CD4-positive, alpha-beta T cell (primary cell): ENCODE measurements at regions of chr2 and their contacts with region 1.

Region 1: GRCh38 chr2:109031476-109032228 is 42.6 kb upstream of the EDAR start:
- DNase-seq: peak; percentile 52 to 93 (median 75)
- ATAC-seq: peak; percentile 78
- H3K4me3 ChIP-seq: peak overlapping the region; percentile 56
- H3K4me3 Mint-ChIP-seq: peak overlapping the region; percentile 82
- H3K27ac ChIP-seq: peak overlapping the region; percentile 82 to 86
- H3K27ac Mint-ChIP-seq: peak overlapping the region; percentile 92
- H3K4me1 ChIP-seq: peaks cover 81% of the 10 kb centered on the region
- H3K4me1 Mint-ChIP-seq: peaks cover 77% of the 10 kb centered on the region
- H3K27me3 ChIP-seq: no peaks in the 10 kb centered on the region
- H3K27me3 Mint-ChIP-seq: no peaks in the 10 kb centered on the region
- CTCF ChIP-seq: no peak

Region 2: DNA sequence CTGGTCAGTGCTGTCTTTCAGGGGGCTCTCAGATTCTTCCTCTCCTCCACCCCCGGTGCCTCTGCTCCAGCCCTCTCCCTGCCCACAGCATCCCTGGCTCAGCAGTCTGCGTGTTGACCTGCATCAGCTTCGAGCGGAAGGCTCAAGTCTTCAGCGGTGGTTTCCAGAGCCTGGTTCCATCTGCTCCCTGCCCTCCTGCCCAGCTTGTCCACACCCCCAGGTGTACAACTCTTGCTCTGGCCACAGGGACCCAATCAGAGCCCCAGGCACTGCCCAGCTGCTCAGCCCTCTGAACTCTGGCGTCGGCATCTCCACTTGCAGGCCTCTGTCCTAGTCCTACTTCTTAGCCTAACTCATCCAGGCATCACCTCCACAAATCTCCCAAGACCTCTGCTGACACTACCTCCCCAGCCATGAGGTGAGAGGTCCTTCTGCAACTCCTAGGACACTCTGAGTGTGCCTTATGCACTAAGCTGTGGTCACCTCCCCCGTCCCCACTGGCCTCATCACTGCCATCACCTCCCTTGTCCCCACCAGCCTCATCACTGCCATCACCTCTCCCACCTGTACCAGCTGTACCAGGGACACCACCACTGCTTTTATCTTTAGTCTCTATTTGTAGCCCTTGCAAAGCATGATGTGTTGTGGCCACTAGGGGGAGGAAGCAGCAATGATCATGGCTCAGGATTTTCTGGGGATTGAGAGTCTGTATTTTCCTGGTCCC is 103.6 kb before region 1 on chr2:
- CTCF ChIA-PET with region 1: no interaction called
- POLR2A ChIA-PET with region 1: interaction called, 10 read pairs
- intact Hi-C with region 1: no loop called
- DNase-seq: peak in 13 of 14 experiments; percentile 8 to 72 (median 32)
- ATAC-seq: peak; percentile 73
- H3K4me3 ChIP-seq: no peak overlapping the region
- H3K4me3 Mint-ChIP-seq: no peak overlapping the region
- H3K27ac ChIP-seq: no peak overlapping the region
- H3K27ac Mint-ChIP-seq: no peak overlapping the region
- H3K4me1 ChIP-seq: peaks cover 6% of the 10 kb centered on the region
- H3K4me1 Mint-ChIP-seq: peaks cover 13% of the 10 kb centered on the region
- H3K27me3 ChIP-seq: no peaks in the 10 kb centered on the region
- H3K27me3 Mint-ChIP-seq: no peaks in the 10 kb centered on the region
- CTCF ChIP-seq: peak; percentile 82

Region 3: DNA sequence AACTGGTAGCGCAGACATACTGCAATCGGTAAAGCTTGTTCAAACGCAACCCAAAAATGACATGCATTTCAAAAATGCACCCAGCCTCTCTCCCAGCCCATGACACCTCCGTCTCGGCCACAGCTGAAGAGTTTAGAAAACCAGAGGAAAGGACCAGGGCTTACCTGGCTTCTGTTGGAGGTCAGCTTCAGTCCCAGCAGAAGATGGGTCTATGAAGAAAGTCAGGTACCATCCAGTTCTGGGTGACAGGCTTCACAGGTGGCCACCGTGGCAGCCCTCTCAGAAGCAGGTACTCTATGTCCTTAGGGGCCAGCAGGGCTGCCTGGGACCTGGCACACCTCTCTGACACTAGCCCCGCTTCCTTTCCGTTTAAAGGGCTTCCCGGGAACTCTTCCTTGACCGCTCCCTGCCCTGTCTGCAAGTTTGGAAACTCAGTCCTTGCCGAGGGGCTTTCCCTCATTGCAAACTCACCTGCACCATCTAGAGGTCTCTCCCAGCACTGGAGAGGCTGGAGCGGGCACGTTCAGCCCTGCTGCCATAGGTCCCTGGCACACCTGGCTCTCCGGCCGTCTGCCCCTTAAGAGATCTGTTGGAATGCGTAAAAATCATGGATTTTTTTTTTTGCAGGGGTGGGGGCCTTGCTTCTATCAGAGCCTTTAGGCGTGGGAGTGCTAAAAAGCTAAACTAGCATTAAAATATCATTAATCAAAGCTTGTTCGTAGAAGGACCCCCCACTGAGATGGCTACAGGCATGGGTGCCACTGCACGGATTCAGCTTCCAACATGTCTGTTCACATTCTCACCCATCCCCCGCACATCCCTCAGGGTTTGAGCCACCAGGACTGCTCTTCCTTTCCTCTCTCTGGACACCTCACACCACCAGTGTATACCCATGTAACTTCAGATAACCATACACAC is 42.6 kb before region 1 on chr2 and contains the start of gene EDAR:
- CTCF ChIA-PET with region 1: interaction called, 6 read pairs
- POLR2A ChIA-PET with region 1: interaction called, 109 read pairs
- intact Hi-C with region 1: loop called in 1 of 2 experiments (anchors 1 kb)
- DNase-seq: peak; percentile 29 to 77 (median 50)
- ATAC-seq: peak; percentile 66
- H3K4me3 ChIP-seq: peak within 1 kb of the TSS; percentile 68
- H3K4me3 Mint-ChIP-seq: peak within 1 kb of the TSS; percentile 94
- H3K27ac ChIP-seq: peak within 1 kb of the TSS in 1 of 2 donors; percentile 62
- H3K27ac Mint-ChIP-seq: peak within 1 kb of the TSS; percentile 84
- H3K4me1 ChIP-seq: peaks cover 48% of the 10 kb centered on the region
- H3K4me1 Mint-ChIP-seq: peaks cover 74% of the 10 kb centered on the region
- H3K27me3 ChIP-seq: peaks cover 0 to 4% of the 10 kb centered on the region in 2 experiments
- H3K27me3 Mint-ChIP-seq: no peaks in the 10 kb centered on the region
- CTCF ChIP-seq: peak; percentile 74
- total RNA-seq, gene EDAR: 9.4 to 10.3 TPM

Region 4: GRCh38 chr2:109046925-109047508 is 15.4 kb after region 1 on chr2:
- CTCF ChIA-PET with region 1: interaction called, 4 read pairs
- POLR2A ChIA-PET with region 1: interaction called, 20 read pairs
- intact Hi-C with region 1: no loop called
- DNase-seq: no peak
- ATAC-seq: no peak
- H3K4me3 ChIP-seq: no peak overlapping the region
- H3K4me3 Mint-ChIP-seq: peak overlapping the region; percentile 42
- H3K27ac ChIP-seq: no peak overlapping the region
- H3K27ac Mint-ChIP-seq: no peak overlapping the region
- H3K4me1 ChIP-seq: peaks cover 12% of the 10 kb centered on the region
- H3K4me1 Mint-ChIP-seq: peaks cover 36% of the 10 kb centered on the region
- H3K27me3 ChIP-seq: no peaks in the 10 kb centered on the region
- H3K27me3 Mint-ChIP-seq: no peaks in the 10 kb centered on the region
- CTCF ChIP-seq: no peak

Region 5: DNA sequence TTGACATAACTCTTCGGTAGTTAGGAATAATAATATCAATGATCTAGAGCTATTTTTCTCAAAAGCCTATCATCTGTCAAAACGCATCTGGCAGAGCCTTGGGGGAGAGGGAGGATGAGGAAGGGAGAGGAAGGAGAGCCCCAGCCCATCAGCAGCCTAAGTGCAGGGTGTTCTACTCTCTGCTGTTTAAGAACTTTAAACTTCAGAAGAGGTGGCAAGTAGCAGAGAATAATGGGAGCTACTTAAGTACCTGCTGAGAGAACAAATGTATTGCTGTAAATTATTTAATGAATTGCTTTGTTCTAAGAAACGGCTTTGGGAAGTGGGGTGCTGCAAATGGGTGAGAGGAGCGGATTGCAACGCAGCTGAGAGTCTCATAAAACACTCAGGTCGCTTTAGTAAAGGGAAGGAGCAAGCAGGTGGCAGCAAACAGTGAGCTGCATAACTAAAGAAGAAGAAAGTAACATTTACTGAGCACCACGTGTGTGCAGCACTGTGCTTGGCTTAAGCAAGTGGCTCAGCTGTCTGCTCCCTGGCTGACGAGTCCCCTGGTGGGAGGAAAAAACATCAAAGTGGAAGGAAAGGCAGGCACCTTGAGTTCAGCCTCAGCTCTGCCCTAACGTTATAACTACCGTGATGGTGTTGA is 71.1 kb after region 1 on chr2:
- CTCF ChIA-PET with region 1: no interaction called
- POLR2A ChIA-PET with region 1: interaction called, 27 read pairs
- intact Hi-C with region 1: loop called (anchors 5 to 10 kb)
- DNase-seq: peak in 7 of 14 experiments; percentile 4 to 52 (median 11)
- ATAC-seq: peak; percentile 82
- H3K4me3 ChIP-seq: no peak overlapping the region
- H3K4me3 Mint-ChIP-seq: peak overlapping the region; percentile 12
- H3K27ac ChIP-seq: no peak overlapping the region
- H3K27ac Mint-ChIP-seq: peak overlapping the region; percentile 21
- H3K4me1 ChIP-seq: peaks cover 10% of the 10 kb centered on the region
- H3K4me1 Mint-ChIP-seq: peaks cover 26% of the 10 kb centered on the region
- H3K27me3 ChIP-seq: no peaks in the 10 kb centered on the region
- H3K27me3 Mint-ChIP-seq: no peaks in the 10 kb centered on the region
- CTCF ChIP-seq: no peak

Region 6: DNA sequence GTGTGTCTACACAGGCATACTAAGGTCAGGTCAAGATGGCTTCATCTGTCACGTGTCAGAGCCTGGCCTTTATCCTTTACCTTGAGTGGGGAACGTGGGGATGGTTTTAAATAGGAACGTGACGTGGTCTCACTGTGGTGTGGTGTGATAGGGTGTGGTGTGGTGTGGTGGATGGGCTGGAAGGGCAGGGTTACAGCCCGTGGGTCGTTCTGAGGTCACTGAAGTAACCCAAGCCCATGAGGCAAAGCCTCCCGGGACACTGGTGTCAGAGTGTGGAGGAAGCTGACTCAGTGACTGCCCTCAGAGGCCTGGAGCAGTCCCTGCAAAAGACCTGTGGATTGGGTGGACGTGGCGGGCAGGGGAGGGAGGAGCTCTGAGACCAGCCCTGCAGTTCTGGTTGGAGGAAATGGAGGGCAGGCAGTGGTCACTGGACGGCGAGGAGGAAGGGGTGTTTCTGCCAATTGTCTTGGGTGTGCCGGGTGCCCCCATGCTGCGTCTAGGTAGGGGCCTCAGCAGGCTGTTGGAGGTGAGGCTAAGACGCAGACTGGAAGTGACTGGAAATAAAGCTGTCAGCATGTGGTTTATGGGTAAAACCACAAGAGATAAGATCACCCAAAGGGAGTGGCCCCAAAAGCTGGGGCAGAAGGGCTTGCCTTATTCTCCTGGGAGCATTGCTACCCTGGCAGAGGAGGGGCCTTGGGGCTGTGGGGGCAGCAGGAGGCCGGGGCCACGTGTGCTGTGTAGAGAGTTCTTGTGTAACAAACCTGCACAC is 182.2 kb after region 1 on chr2:
- CTCF ChIA-PET with region 1: no interaction called
- POLR2A ChIA-PET with region 1: interaction called, 17 read pairs
- intact Hi-C with region 1: loop called (anchors 5 to 10 kb)
- DNase-seq: peak; percentile 15 to 88 (median 42)
- ATAC-seq: peak; percentile 82
- H3K4me3 ChIP-seq: no peak overlapping the region
- H3K4me3 Mint-ChIP-seq: peak overlapping the region; percentile 75
- H3K27ac ChIP-seq: no peak overlapping the region
- H3K27ac Mint-ChIP-seq: peak overlapping the region; percentile 69
- H3K4me1 ChIP-seq: peaks cover 63% of the 10 kb centered on the region
- H3K4me1 Mint-ChIP-seq: peaks cover 73% of the 10 kb centered on the region
- H3K27me3 ChIP-seq: peaks cover 44 to 61% of the 10 kb centered on the region in 2 experiments
- H3K27me3 Mint-ChIP-seq: peaks cover 89% of the 10 kb centered on the region
- CTCF ChIP-seq: no peak

Region 7: GRCh38 chr2:109475531-109476210 is 444.0 kb after region 1 on chr2:
- CTCF ChIA-PET with region 1: no interaction called
- POLR2A ChIA-PET with region 1: no interaction called
- intact Hi-C with region 1: no loop called
- DNase-seq: no peak
- ATAC-seq: no peak
- H3K4me3 ChIP-seq: no peak overlapping the region
- H3K4me3 Mint-ChIP-seq: no peak overlapping the region
- H3K27ac ChIP-seq: no peak overlapping the region
- H3K27ac Mint-ChIP-seq: no peak overlapping the region
- H3K4me1 ChIP-seq: no peaks in the 10 kb centered on the region
- H3K4me1 Mint-ChIP-seq: no peaks in the 10 kb centered on the region
- H3K27me3 ChIP-seq: no peaks in the 10 kb centered on the region
- H3K27me3 Mint-ChIP-seq: no peaks in the 10 kb centered on the region
- CTCF ChIP-seq: no peak